ENCODE measurements at regions of chr13 and their contacts with region 1.

Region 1: GRCh38 chr13:49443704-49444523 is at the starts of genes CAB39L and SETDB2:
- DNase-seq: peak; percentile 99
- H3K4me3 Mint-ChIP-seq: peak within 1 kb of the TSS; percentile 92
- H3K27ac Mint-ChIP-seq: peak within 1 kb of the TSS; percentile 99
- H3K4me1 Mint-ChIP-seq: peaks cover 7% of the 10 kb centered on the region
- H3K27me3 Mint-ChIP-seq: no peaks in the 10 kb centered on the region
- CTCF ChIP-seq: peak; percentile 9
- total RNA-seq, gene CAB39L: 6.2 and 11.1 TPM in 2 replicates
- total RNA-seq, gene SETDB2: 6.1 and 7.3 TPM in 2 replicates

Region 2: GRCh38 chr13:48962281-48962680 is 481.6 kb before region 1 on chr13:
- CTCF ChIA-PET with region 1: no interaction called
- POLR2A ChIA-PET with region 1: no interaction called
- intact Hi-C with region 1: no loop called
- DNase-seq: peak; percentile 74
- H3K4me3 Mint-ChIP-seq: no peak overlapping the region
- H3K27ac Mint-ChIP-seq: peak overlapping the region; percentile 27
- H3K4me1 Mint-ChIP-seq: peaks cover 18% of the 10 kb centered on the region
- H3K27me3 Mint-ChIP-seq: no peaks in the 10 kb centered on the region
- CTCF ChIP-seq: no peak

Region 3: DNA sequence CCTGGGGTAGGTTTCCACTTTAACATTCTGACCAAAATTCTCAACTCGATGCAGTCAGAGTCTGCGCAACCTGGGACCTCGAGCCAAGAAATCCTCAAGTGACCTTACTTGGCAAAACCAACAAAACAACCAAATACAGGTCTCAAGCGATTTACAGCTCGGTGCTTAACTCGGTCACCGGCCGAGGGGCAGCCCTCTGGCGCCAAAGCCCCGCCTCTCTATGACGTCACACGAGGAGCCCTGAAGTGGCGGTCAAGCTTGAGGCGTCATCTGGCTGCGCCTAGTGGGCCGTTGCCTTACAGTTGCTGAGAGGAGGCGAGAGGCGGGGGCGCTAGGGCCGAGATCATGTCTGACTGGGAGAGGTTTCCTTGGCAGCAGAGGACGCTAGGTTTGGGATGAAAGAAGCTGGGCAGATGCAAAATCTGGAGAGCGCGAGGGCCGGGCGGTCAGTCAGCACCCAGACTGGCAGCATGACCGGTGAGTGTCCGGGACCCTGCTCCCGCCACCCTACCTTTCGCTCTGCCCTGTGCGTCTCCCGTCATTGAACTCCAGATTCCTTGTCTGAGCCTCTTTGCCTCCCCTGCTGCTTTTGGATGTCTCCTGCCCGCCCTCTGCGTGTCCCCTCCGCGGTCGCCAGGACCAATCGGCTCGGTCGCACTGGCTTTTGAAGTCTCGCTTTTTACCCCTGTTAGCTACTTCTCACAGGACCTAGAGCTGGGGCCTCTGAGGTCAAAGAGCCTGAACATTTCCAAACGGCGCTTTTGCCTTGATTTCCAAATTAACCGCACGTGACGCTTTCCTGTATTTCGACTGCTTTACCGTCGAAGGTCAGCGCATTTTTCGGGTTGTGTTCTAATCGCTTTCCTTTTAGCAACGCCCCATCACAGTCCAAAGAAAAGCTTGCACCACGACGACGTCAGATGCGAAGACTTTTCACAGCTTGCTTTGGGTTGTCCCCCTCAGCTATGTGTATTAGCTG is 196.0 kb before region 1 on chr13 and contains the start of gene CDADC1:
- CTCF ChIA-PET with region 1: interaction called, 3 read pairs
- POLR2A ChIA-PET with region 1: interaction called, 21 read pairs
- intact Hi-C with region 1: no loop called
- DNase-seq: peak; percentile 95
- H3K4me3 Mint-ChIP-seq: peak within 1 kb of the TSS; percentile 96
- H3K27ac Mint-ChIP-seq: peak within 1 kb of the TSS; percentile 97
- H3K4me1 Mint-ChIP-seq: peaks cover 6% of the 10 kb centered on the region
- H3K27me3 Mint-ChIP-seq: no peaks in the 10 kb centered on the region
- CTCF ChIP-seq: no peak
- total RNA-seq, gene CDADC1: 8.0 and 9.4 TPM in 2 replicates

Region 4: DNA sequence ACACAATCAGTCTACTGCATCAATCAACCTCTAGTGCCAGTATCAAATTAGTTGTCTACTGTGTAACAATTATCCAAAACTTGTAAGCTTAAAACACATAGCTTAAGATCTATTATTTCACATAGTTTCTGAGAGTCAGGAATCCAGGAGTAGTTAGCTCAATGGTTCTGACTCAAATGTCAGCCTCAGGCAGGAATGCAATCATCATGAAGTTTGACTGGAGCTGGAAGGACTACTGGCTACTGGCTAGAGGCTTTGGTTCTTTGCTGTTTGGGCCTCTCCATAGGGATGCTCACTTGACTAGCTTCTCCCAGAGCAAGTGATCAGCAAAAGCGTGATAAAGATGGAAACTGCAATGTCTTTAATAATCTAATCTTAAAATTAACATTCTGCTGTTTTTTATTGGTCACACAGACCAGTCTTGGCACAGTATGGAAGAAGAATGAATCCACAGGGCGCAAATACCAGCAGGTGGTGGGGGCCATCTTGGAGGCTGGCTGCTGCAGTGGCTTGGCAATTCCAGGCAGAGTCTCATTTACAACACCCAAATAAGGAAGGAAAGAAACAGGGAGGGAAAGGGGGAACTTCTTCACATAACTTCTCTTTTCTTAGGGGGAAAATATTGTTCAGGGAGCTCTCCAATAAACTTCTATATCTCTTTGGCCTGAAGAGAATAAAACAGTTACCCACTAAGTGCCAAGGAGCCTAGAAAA is 15.7 kb before region 1 on chr13:
- CTCF ChIA-PET with region 1: interaction called, 6 read pairs
- POLR2A ChIA-PET with region 1: interaction called, 37 read pairs
- intact Hi-C with region 1: no loop called
- DNase-seq: no peak
- H3K4me3 Mint-ChIP-seq: no peak overlapping the region
- H3K27ac Mint-ChIP-seq: no peak overlapping the region
- H3K4me1 Mint-ChIP-seq: no peaks in the 10 kb centered on the region
- H3K27me3 Mint-ChIP-seq: no peaks in the 10 kb centered on the region
- CTCF ChIP-seq: no peak

Region 5: GRCh38 chr13:49466292-49466838 is 22.5 kb after region 1 on chr13:
- CTCF ChIA-PET with region 1: interaction called, 3 read pairs
- POLR2A ChIA-PET with region 1: interaction called, 14 read pairs
- intact Hi-C with region 1: no loop called
- DNase-seq: no peak
- H3K4me3 Mint-ChIP-seq: no peak overlapping the region
- H3K27ac Mint-ChIP-seq: no peak overlapping the region
- H3K4me1 Mint-ChIP-seq: no peaks in the 10 kb centered on the region
- H3K27me3 Mint-ChIP-seq: no peaks in the 10 kb centered on the region
- CTCF ChIP-seq: no peak

Region 6: DNA sequence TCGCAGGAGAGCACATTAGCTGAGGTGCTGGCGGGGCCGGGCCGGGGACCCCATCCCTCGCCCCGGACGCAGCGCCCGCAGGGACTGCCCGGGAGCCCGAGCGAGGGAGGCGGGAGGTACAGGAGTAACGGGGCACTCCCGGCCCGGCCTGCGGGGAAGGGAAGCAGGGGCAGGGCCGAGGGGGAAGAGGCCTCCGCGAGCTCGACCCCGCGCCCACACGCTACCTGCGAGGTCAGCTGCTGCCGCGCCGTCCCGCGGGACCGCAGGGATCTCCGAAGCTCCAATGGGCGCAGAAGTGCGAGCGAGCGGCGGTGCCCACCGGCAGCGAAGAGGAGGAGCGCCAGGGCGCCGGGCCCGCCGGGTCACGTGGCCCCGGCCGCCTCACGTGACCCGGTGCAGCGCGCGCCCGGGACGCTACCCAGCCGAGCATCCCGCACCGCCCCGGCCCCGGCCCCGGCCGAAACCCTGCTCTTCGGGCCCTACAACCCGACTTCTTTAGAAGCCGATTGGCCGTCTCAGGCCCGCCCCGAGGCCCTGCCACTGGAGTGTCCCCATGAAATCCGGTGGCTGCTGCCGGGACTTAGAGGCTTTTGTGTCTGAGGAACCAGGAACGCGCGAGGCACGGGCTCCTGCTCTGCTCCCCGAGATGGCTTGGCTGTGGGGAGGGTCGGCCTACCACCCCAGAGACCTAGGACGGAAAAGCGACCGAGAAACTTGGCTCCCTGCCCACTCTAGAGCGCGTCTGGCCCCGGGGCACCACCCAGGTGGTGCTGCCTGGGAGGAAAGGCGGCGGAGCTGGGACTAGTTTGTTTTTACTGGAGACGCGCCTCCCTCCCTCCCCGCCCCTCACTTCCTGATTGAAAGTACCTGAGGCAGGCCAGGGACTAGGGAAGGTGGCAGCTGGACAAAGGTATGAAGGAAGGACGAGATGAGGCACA is 141.6 kb after region 1 on chr13 and contains the start of gene RCBTB1:
- CTCF ChIA-PET with region 1: interaction called, 3 read pairs
- POLR2A ChIA-PET with region 1: interaction called, 46 read pairs
- intact Hi-C with region 1: no loop called
- DNase-seq: peak; percentile 70
- H3K4me3 Mint-ChIP-seq: peak within 1 kb of the TSS; percentile 77
- H3K27ac Mint-ChIP-seq: peak within 1 kb of the TSS; percentile 83
- H3K4me1 Mint-ChIP-seq: peaks cover 31% of the 10 kb centered on the region
- H3K27me3 Mint-ChIP-seq: no peaks in the 10 kb centered on the region
- CTCF ChIP-seq: no peak
- total RNA-seq, gene RCBTB1: 16.8 and 17.9 TPM in 2 replicates

Region 7: GRCh38 chr13:49690992-49691886 is 247.3 kb after region 1 on chr13 and contains the start of gene EBPL:
- CTCF ChIA-PET with region 1: no interaction called
- POLR2A ChIA-PET with region 1: interaction called, 11 read pairs
- intact Hi-C with region 1: no loop called
- DNase-seq: peak; percentile 97
- H3K4me3 Mint-ChIP-seq: peak within 1 kb of the TSS; percentile 94
- H3K27ac Mint-ChIP-seq: peak within 1 kb of the TSS; percentile 97
- H3K4me1 Mint-ChIP-seq: peaks cover 34% of the 10 kb centered on the region
- H3K27me3 Mint-ChIP-seq: no peaks in the 10 kb centered on the region
- CTCF ChIP-seq: no peak
- total RNA-seq, gene EBPL: 90.1 and 121 TPM in 2 replicates